GM12878 (cell line): ENCODE measurements at regions of chr11 and their contacts with region 1.

Region 1: DNA sequence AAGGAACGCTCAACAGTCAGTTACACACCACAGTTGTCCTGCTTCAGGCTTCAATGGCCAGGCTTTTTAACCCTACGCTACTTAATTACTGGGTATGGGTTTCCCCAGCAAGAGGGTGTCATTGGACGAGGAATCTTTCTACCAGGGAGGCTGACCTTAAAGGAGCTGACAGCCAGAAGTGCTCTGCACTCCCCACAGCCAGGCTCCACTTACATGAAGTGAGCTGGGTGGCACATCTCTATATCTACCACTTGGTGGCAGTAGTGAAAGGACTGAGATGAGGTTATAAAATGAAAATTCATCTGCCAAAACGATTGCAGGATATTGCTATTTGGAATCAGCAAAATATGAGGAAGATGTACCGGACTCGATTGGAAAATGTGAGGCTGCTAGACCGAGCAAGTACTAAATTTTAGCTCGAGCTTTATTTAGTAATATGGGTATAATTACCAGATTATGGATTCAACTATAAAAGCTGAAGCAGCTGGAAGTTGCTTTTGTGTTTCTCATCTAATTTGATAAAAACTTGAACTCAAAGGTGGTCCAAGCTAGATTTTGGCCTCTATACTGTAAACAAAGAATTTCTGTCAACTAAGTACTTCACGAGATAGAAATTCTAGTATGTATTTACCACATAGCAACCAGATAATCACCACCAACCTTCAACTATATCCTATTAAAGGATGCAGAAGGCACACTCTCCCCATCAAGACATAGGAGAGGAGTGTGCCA is 53.9 kb upstream of the CEP126 start:
- DNase-seq: no peak
- ATAC-seq: peak; percentile 91
- H3K4me3 ChIP-seq: no peak overlapping the region
- H3K27ac ChIP-seq: no peak overlapping the region
- H3K4me1 ChIP-seq: no peaks in the 10 kb centered on the region
- H3K27me3 ChIP-seq: no peaks in the 10 kb centered on the region; a peak in 1 of 4 replicates
- CTCF ChIP-seq: peak; percentile 61 to 72 (median 65)
- EP300 ChIP-seq: no peak
- POLR2A ChIP-seq: no peak
- RAD21 ChIP-seq: peak; percentile 57

Region 2: GRCh38 chr11:101880222-101880621 is 19.4 kb after region 1 on chr11:
- CTCF ChIA-PET with region 1: interaction called, 19 read pairs
- POLR2A ChIA-PET with region 1: no interaction called
- RAD21 ChIA-PET with region 1: interaction called, 4 read pairs
- SMC1A ChIA-PET with region 1: interaction called, 11 read pairs
- in situ Hi-C with region 1: no loop called
- intact Hi-C with region 1: no loop called
- DNase-seq: no peak
- ATAC-seq: peak; percentile 50; the same call in 2 of the 3 replicates
- H3K4me3 ChIP-seq: no peak overlapping the region
- H3K27ac ChIP-seq: no peak overlapping the region
- H3K4me1 ChIP-seq: no peaks in the 10 kb centered on the region
- H3K27me3 ChIP-seq: no peaks in the 10 kb centered on the region
- CTCF ChIP-seq: peak; percentile 33 to 51 (median 36); a peak in 3 of 6 replicates
- EP300 ChIP-seq: no peak
- POLR2A ChIP-seq: no peak
- RAD21 ChIP-seq: no peak